ENCODE measurements at regions of chr17 and their contacts with region 1.

Region 1: DNA sequence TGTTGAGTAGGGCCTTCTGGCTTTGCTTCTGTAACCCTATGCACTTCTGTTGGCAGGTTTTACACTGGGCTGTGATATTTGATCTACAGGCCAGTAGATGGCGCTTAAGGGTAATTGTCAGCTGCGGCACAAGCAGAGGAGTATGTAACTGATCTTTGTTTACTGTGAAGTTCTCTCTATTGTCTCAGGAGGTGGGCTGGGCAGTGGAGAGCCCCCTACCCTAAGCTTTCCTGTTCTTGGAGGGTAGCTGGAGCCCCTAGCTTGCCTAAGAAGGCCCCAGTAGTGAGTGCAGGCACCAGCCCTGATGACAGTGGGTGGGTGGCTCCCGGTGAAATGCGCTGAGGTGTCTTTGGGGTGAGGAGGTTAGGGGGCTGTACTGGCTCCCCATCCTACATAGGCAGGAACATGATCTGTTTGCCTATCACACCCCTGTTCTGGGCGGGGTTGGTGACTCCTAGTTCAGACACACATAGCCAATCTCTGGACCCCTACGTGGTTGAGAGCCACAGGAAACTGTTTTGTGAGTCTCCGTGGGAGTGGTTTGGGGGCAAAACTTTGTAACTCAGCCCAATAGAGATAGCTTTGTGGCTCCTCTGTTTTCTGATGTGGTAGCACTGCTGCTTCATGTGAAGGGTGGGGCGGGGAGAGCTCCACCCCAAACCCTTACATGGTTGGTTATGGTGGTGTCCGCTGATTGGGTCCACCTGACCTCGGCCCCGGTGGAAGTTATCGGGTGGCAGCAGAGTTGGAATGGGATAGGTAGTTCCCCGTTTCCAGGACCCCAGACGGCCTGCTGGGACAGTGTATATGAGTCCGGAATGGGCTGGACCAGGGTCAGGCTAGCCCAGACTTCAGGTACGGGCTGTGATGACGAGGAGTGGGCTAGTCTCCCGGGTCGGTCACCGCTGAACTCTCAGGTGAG is 60.4 kb downstream of the SLFN11 start:
- DNase-seq: peak; percentile 41
- H3K4me3 Mint-ChIP-seq: no peak overlapping the region
- H3K27ac Mint-ChIP-seq: no peak overlapping the region
- H3K4me1 Mint-ChIP-seq: peaks cover 19% of the 10 kb centered on the region
- H3K27me3 Mint-ChIP-seq: no peaks in the 10 kb centered on the region
- CTCF ChIP-seq: peak; percentile 75

Region 2: DNA sequence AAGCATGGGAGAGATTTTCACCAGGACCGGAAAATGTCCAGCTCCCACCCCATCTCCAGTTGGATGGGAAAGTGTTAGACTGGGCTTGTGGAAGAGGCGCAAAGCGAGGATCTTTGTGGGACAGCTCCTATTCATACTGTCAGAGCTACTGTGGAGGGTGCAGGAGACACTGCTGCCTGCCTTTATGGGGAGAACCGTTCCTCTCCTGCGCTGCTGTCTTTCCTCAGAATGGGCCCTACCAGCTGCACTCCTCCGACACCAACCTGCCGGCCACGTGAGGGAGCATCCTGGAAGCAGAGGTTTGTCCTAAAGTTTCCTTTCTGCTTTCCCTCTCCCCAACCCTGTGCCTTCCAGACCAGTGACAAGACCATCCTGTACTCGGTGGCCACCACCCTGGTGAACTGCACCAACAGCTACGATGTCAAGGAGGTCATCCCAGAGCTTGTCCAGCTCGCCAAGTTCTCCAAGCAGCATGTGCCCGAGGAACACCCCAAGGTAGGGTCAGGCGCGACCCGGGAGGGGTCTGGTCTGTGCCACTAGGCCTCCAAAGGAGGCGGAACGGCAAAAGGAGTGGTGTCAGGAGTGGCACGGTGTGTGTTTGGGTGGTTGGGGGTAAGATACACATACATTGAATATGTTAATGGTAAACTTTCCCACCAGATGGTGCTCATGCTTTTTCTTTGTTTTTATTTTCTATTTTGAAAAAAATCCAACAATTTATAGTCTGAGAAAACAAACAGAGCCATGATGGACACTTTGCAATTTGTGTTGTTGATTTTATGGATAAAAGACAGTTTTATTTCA is 141.9 kb before region 1 on chr17:
- CTCF ChIA-PET with region 1: no interaction called
- intact Hi-C with region 1: loop called (anchors 10 kb)
- DNase-seq: no peak
- H3K4me3 Mint-ChIP-seq: no peak overlapping the region
- H3K27ac Mint-ChIP-seq: no peak overlapping the region
- H3K4me1 Mint-ChIP-seq: no peaks in the 10 kb centered on the region
- H3K27me3 Mint-ChIP-seq: peaks cover 45% of the 10 kb centered on the region
- CTCF ChIP-seq: no peak

Region 3: DNA sequence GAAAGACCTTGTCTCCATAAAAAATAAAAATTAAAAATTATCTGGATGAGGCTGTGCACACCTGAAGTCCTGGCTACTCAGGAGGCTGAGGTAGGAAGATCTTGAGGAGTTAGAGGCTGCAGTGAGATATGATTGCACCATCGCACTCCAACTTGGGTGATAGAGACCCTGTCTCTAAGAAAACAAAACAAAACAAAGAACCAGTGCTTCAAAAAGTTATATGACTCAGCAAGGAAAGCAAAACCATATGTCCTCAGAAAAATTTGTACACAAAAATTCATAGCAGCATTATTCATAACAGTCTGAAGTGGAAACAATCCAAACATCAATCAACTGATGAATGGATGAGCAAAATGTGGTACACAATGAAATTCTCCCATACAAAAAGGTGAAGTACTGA is 21.2 kb before region 1 on chr17:
- CTCF ChIA-PET with region 1: no interaction called
- intact Hi-C with region 1: no loop called
- DNase-seq: no peak
- H3K4me3 Mint-ChIP-seq: no peak overlapping the region
- H3K27ac Mint-ChIP-seq: no peak overlapping the region
- H3K4me1 Mint-ChIP-seq: peaks cover 9% of the 10 kb centered on the region
- H3K27me3 Mint-ChIP-seq: no peaks in the 10 kb centered on the region
- CTCF ChIP-seq: no peak

Region 4: GRCh38 chr17:35432176-35433074 is 119.4 kb after region 1 on chr17 and contains the start of gene SLFN12:
- CTCF ChIA-PET with region 1: no interaction called
- intact Hi-C with region 1: loop called (anchors 10 kb)
- DNase-seq: no peak
- H3K4me3 Mint-ChIP-seq: no peak within 1 kb of the TSS
- H3K27ac Mint-ChIP-seq: no peak within 1 kb of the TSS
- H3K4me1 Mint-ChIP-seq: peaks cover 25% of the 10 kb centered on the region
- H3K27me3 Mint-ChIP-seq: no peaks in the 10 kb centered on the region
- CTCF ChIP-seq: no peak
- total RNA-seq, gene SLFN12: 0.44 and 0.54 TPM in 2 replicates

Region 5: GRCh38 chr17:35477248-35477647 is 164.2 kb after region 1 on chr17:
- CTCF ChIA-PET with region 1: no interaction called
- intact Hi-C with region 1: no loop called
- DNase-seq: no peak
- H3K4me3 Mint-ChIP-seq: no peak overlapping the region
- H3K27ac Mint-ChIP-seq: no peak overlapping the region
- H3K4me1 Mint-ChIP-seq: no peaks in the 10 kb centered on the region
- H3K27me3 Mint-ChIP-seq: peaks cover 63% of the 10 kb centered on the region
- CTCF ChIP-seq: no peak

Region 6: DNA sequence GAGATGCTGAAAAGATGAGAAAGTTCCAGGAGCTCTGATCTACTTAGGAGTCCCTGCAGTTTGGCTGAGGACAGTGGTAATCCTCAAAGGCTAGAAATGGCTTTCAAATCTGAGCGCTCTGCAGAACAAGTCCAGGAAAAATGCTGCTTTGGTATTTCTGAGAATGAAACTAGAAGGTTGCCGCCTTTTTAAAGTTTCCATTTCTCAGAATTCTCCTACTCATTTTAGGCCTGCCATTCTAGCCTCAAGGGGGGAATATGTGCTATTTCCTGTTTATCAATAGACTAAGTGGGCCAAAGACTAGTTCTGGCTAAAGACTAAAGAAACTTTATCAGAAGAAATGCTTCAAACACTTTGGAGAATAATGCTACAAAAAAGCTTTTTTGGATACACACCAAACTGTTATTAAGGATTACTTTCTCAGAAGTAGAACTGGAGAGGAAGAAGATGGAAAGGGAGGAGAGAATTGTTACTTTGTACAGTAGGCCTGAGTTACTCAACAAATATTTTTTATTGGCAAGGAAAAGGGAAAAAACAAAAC is 224.6 kb after region 1 on chr17 and contains the start of gene SLFN12L:
- CTCF ChIA-PET with region 1: interaction called, 13 read pairs
- intact Hi-C with region 1: loop called (anchors 1 kb)
- DNase-seq: no peak
- H3K4me3 Mint-ChIP-seq: no peak within 1 kb of the TSS
- H3K27ac Mint-ChIP-seq: no peak within 1 kb of the TSS
- H3K4me1 Mint-ChIP-seq: peaks cover 21% of the 10 kb centered on the region
- H3K27me3 Mint-ChIP-seq: no peaks in the 10 kb centered on the region
- CTCF ChIP-seq: no peak
- total RNA-seq, gene SLFN12L: 0.14 and 0.51 TPM in 2 replicates

Region 7: GRCh38 chr17:35784895-35785294 is 471.8 kb after region 1 on chr17:
- CTCF ChIA-PET with region 1: no interaction called
- intact Hi-C with region 1: no loop called
- DNase-seq: no peak
- H3K4me3 Mint-ChIP-seq: no peak overlapping the region
- H3K27ac Mint-ChIP-seq: no peak overlapping the region
- H3K4me1 Mint-ChIP-seq: peaks cover 12% of the 10 kb centered on the region
- H3K27me3 Mint-ChIP-seq: no peaks in the 10 kb centered on the region
- CTCF ChIP-seq: no peak